ENCODE measurements at regions of chr14 and their contacts with region 1.

Region 1: GRCh38 chr14:77028384-77029231 is at the start of gene IRF2BPL:
- DNase-seq: peak; percentile 98
- H3K4me3 ChIP-seq: peak within 1 kb of the TSS; percentile 87
- H3K27ac ChIP-seq: peak within 1 kb of the TSS; percentile 97
- H3K4me1 ChIP-seq: peaks cover 47% of the 10 kb centered on the region
- H3K27me3 ChIP-seq: no peaks in the 10 kb centered on the region
- CTCF ChIP-seq: no peak
- total RNA-seq, gene IRF2BPL: 51.2 and 55.9 TPM in 2 replicates

Region 2: DNA sequence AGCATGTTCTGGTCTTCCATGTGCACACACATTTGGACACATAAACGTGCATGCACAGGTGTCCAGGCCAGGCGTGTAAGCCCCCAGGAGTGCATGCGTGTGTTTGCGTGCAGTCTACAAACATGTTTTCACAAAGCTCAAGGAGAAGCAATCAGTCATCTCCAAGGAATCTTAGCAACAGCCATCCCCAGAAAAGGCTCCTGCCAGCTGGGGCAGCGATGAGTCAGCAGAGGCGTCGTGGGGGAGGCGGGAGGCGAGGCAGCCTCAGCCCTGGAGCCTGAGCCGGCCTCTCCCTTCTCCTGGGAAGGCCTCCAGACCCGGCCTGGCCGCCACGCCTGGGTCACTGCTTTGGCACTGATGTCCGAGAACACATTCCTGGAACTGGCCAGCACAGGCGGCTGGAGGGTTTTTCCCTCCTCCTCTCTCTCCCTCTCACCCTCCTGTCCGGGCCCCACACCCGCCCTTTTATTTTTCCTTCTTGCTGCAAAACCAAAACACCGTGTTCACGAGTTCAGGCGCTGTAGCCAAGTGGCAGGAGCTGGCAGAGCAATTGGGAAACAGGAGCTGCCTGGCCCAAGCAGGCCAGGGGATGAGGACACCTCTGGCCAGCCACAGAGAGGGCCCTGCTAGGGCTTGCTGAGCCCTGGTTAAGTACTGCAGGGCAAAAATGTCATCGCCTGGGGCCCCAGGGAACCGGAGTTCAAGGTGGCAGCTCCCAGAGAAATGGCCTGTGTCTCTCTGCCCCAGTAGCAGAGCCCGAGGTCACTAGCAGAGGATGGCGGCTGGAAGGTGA is 109.7 kb before region 1 on chr14:
- CTCF ChIA-PET with region 1: no interaction called
- POLR2A ChIA-PET with region 1: no interaction called
- intact Hi-C with region 1: loop called (anchors 5 kb)
- DNase-seq: peak; percentile 92
- H3K4me3 ChIP-seq: no peak overlapping the region
- H3K27ac ChIP-seq: peak overlapping the region; percentile 99
- H3K4me1 ChIP-seq: peaks cover 83% of the 10 kb centered on the region
- H3K27me3 ChIP-seq: no peaks in the 10 kb centered on the region
- CTCF ChIP-seq: no peak

Region 3: GRCh38 chr14:76947078-76947837 is 81.3 kb before region 1 on chr14:
- CTCF ChIA-PET with region 1: interaction called, 4 read pairs
- POLR2A ChIA-PET with region 1: no interaction called
- intact Hi-C with region 1: loop called (anchors 2 kb)
- DNase-seq: peak; percentile 98
- H3K4me3 ChIP-seq: peak overlapping the region; percentile 21
- H3K27ac ChIP-seq: peak overlapping the region; percentile 98
- H3K4me1 ChIP-seq: peaks cover 47% of the 10 kb centered on the region
- H3K27me3 ChIP-seq: no peaks in the 10 kb centered on the region
- CTCF ChIP-seq: peak; percentile 60

Region 4: GRCh38 chr14:76956316-76957090 is 72.1 kb before region 1 on chr14:
- CTCF ChIA-PET with region 1: interaction called, 10 read pairs
- POLR2A ChIA-PET with region 1: no interaction called
- intact Hi-C with region 1: loop called (anchors 2 kb)
- DNase-seq: peak; percentile 99
- H3K4me3 ChIP-seq: peak overlapping the region; percentile 35
- H3K27ac ChIP-seq: peak overlapping the region; percentile 99
- H3K4me1 ChIP-seq: peaks cover 70% of the 10 kb centered on the region
- H3K27me3 ChIP-seq: no peaks in the 10 kb centered on the region
- CTCF ChIP-seq: no peak

Region 5: GRCh38 chr14:76984297-76984696 is 44.3 kb before region 1 on chr14:
- CTCF ChIA-PET with region 1: no interaction called
- POLR2A ChIA-PET with region 1: interaction called, 11 read pairs
- intact Hi-C with region 1: no loop called
- DNase-seq: no peak
- H3K4me3 ChIP-seq: no peak overlapping the region
- H3K27ac ChIP-seq: no peak overlapping the region
- H3K4me1 ChIP-seq: no peaks in the 10 kb centered on the region
- H3K27me3 ChIP-seq: no peaks in the 10 kb centered on the region
- CTCF ChIP-seq: no peak

Region 6: DNA sequence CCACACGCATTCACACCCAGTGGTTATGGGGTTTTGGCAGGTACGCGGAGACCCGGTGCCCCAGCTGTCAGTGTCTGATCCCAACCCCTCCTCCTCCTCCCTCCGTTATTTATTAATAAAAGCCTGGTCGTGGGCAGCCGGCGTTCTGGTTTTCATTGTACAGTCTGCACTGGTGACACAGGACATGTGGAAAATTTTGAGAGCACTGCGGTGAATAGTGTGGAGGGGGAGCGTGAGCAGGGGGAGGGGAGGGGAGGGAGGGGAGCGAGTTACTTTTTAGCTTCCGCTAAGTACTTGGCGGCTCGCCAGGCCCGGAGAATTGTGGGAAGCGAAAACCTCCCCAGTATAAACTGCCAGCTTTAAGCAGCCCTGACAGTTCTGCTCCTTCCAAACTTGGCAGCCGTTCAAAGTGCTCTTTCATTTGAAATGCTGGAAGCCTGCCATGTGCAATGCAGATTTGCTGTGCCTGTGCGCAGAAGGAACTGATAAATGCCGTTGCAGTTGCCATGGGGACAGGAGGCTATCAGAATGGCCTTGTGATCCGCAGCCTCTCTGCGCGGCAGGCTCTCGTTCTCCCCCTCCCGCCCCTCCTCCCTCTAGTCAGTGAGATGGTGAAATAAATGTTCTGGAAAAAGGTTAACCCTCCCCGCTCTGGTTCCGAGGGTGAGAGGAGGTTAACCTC is 11.6 kb after region 1 on chr14:
- CTCF ChIA-PET with region 1: no interaction called
- POLR2A ChIA-PET with region 1: no interaction called
- intact Hi-C with region 1: loop called (anchors 1 kb)
- DNase-seq: peak; percentile 100
- H3K4me3 ChIP-seq: peak overlapping the region; percentile 25
- H3K27ac ChIP-seq: peak overlapping the region; percentile 92
- H3K4me1 ChIP-seq: peaks cover 85% of the 10 kb centered on the region
- H3K27me3 ChIP-seq: no peaks in the 10 kb centered on the region
- CTCF ChIP-seq: no peak

Region 7: DNA sequence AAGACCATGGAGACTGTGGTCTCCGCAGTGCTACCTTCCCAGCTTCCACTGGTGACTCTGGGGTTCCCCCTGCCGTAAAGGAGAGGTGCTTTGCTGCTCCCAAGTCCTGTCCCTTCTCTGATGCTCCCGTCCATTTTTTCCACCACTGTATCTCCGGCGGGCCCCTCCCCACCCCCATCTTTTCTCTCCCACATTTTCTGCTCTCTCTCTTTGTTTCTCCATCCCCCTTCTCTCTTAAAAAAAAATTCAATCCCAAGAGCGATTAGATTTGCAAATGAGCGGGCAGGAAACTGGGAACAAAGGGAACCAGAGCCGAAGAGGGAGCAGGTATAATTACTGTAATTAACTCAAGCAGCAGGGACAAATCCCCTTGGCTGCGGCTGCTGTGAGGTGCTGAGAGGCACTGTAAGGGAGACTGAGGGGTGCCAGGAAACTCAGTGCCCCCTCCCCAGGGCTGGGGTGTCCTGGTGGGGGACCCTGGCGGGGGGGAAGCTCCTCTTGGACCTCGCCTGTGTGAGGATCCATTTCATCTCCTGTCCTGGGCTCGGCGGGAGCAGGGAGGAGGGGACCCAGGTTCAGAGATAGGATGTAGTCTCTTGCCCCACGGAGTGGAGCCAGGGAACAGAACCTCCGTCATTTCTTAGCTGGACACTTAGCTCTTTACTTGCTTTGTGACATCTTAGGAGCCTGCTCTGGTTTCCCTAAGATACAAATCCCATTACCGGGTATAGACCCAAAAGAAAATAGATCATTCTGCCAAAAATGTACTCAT is 1001.2 kb after region 1 on chr14:
- CTCF ChIA-PET with region 1: no interaction called
- POLR2A ChIA-PET with region 1: interaction called, 15 read pairs
- intact Hi-C with region 1: no loop called
- DNase-seq: peak; percentile 63
- H3K4me3 ChIP-seq: no peak overlapping the region
- H3K27ac ChIP-seq: no peak overlapping the region
- H3K4me1 ChIP-seq: peaks cover 11% of the 10 kb centered on the region
- H3K27me3 ChIP-seq: no peaks in the 10 kb centered on the region
- CTCF ChIP-seq: peak; percentile 28; the same call in 1 of the 2 replicates